ENCODE measurements at regions of chr22 and their contacts with region 1.

Region 1: GRCh38 chr22:50326959-50327710 is at the start of gene DENND6B:
- DNase-seq: no peak
- ATAC-seq: peak; percentile 94
- H3K4me3 ChIP-seq: peak within 1 kb of the TSS; percentile 63 to 80
- H3K27ac ChIP-seq: peak within 1 kb of the TSS; percentile 83
- H3K4me1 ChIP-seq: peaks cover 41 to 61% of the 10 kb centered on the region in 2 experiments
- H3K27me3 ChIP-seq: no peaks in the 10 kb centered on the region
- CTCF ChIP-seq: peak in 2 of 3 experiments; percentile 27 to 29; a peak in 2 of 6 replicates
- POLR2A ChIP-seq: peak; percentile 77
- RAD21 ChIP-seq: peak; percentile 46
- total RNA-seq, gene DENND6B: 11.0 TPM

Region 2: GRCh38 chr22:50209893-50210292 is 117.2 kb before region 1 on chr22:
- CTCF ChIA-PET with region 1: no interaction called
- POLR2A ChIA-PET with region 1: no interaction called
- RAD21 ChIA-PET with region 1: no interaction called
- intact Hi-C with region 1: no loop called
- DNase-seq: no peak
- ATAC-seq: peak; percentile 67
- H3K4me3 ChIP-seq: no peak overlapping the region
- H3K27ac ChIP-seq: no peak overlapping the region; the same call in 1 of the 2 replicates
- H3K4me1 ChIP-seq: peaks cover 0 to 16% of the 10 kb centered on the region in 2 experiments; a peak in 2 of 4 replicates
- H3K27me3 ChIP-seq: no peaks in the 10 kb centered on the region
- CTCF ChIP-seq: peak; percentile 75 to 89 (median 89)
- POLR2A ChIP-seq: no peak
- RAD21 ChIP-seq: peak; percentile 71

Region 3: GRCh38 chr22:50274311-50274710 is 52.8 kb before region 1 on chr22:
- CTCF ChIA-PET with region 1: interaction called, 3 read pairs
- POLR2A ChIA-PET with region 1: no interaction called
- RAD21 ChIA-PET with region 1: no interaction called
- intact Hi-C with region 1: loop called (anchors 1 kb)
- DNase-seq: no peak
- ATAC-seq: no peak
- H3K4me3 ChIP-seq: no peak overlapping the region
- H3K27ac ChIP-seq: peak overlapping the region; percentile 49
- H3K4me1 ChIP-seq: peaks cover 14 to 43% of the 10 kb centered on the region in 2 experiments
- H3K27me3 ChIP-seq: no peaks in the 10 kb centered on the region
- CTCF ChIP-seq: peak in 2 of 3 experiments; percentile 23; a peak in 2 of 6 replicates
- POLR2A ChIP-seq: no peak
- RAD21 ChIP-seq: 0 out of 2 replicates have a peak, but pooled peaks have one; percentile 18